Endothelial cell of umbilical vein (primary cell): ENCODE measurements at regions of chr1 and their contacts with region 1.

Region 1: GRCh38 chr1:119808972-119809550 is 2.2 kb downstream of the REG4 start:
- DNase-seq: peak; percentile 65
- H3K4me3 ChIP-seq: no peak overlapping the region
- H3K27ac ChIP-seq: no peak overlapping the region
- H3K4me1 ChIP-seq: no peaks in the 10 kb centered on the region
- H3K27me3 ChIP-seq: peaks cover 14 to 39% of the 10 kb centered on the region in 2 experiments
- CTCF ChIP-seq: peak; percentile 87 to 89
- POLR2A ChIP-seq: no peak

Region 2: GRCh38 chr1:119582801-119583200 is 226.3 kb before region 1 on chr1:
- CTCF ChIA-PET with region 1: interaction called, 3 read pairs
- POLR2A ChIA-PET with region 1: no interaction called
- dilution Hi-C with region 1: no loop called
- intact Hi-C with region 1: loop called (anchors 10 kb)
- DNase-seq: peak; percentile 62
- H3K4me3 ChIP-seq: no peak overlapping the region
- H3K27ac ChIP-seq: no peak overlapping the region
- H3K4me1 ChIP-seq: no peaks in the 10 kb centered on the region
- H3K27me3 ChIP-seq: no peaks in the 10 kb centered on the region
- CTCF ChIP-seq: peak; percentile 54 to 67
- POLR2A ChIP-seq: no peak

Region 3: GRCh38 chr1:119743781-119744597 is 65.1 kb before region 1 on chr1:
- CTCF ChIA-PET with region 1: interaction called, 12 read pairs
- POLR2A ChIA-PET with region 1: no interaction called
- dilution Hi-C with region 1: no loop called
- intact Hi-C with region 1: no loop called
- DNase-seq: peak; percentile 60
- H3K4me3 ChIP-seq: no peak overlapping the region
- H3K27ac ChIP-seq: no peak overlapping the region
- H3K4me1 ChIP-seq: no peaks in the 10 kb centered on the region
- H3K27me3 ChIP-seq: peaks cover 0 to 2% of the 10 kb centered on the region in 2 experiments
- CTCF ChIP-seq: peak; percentile 83 to 85
- POLR2A ChIP-seq: no peak

Region 4: DNA sequence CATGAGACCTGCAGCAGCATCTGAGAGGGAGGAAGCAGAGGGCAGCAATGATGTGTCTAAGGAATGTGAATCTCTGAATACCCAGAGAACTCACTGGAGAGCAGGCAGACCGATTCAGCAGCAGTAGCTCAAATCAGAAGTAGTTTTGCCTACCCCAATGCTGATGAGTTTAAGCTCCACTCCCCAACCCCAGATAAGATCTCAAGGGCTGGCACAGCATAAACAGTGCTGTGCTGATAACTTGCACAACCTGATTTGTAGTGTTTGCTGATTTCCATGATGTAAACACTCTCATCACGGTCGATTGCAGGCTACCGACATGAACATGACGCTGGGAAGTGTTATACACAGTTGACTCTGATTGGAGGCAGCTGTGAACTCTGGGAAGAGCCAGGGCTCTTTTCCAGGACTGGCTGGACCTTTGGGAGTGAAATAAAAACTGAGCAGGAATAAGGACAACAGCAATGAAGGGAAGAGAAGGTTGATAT is 29.1 kb before region 1 on chr1:
- CTCF ChIA-PET with region 1: interaction called, 11 read pairs
- POLR2A ChIA-PET with region 1: no interaction called
- dilution Hi-C with region 1: no loop called
- intact Hi-C with region 1: no loop called
- DNase-seq: no peak
- H3K4me3 ChIP-seq: no peak overlapping the region
- H3K27ac ChIP-seq: no peak overlapping the region
- H3K4me1 ChIP-seq: no peaks in the 10 kb centered on the region
- H3K27me3 ChIP-seq: peaks cover 12 to 13% of the 10 kb centered on the region in 2 experiments
- CTCF ChIP-seq: no peak
- POLR2A ChIP-seq: no peak

Region 5: DNA sequence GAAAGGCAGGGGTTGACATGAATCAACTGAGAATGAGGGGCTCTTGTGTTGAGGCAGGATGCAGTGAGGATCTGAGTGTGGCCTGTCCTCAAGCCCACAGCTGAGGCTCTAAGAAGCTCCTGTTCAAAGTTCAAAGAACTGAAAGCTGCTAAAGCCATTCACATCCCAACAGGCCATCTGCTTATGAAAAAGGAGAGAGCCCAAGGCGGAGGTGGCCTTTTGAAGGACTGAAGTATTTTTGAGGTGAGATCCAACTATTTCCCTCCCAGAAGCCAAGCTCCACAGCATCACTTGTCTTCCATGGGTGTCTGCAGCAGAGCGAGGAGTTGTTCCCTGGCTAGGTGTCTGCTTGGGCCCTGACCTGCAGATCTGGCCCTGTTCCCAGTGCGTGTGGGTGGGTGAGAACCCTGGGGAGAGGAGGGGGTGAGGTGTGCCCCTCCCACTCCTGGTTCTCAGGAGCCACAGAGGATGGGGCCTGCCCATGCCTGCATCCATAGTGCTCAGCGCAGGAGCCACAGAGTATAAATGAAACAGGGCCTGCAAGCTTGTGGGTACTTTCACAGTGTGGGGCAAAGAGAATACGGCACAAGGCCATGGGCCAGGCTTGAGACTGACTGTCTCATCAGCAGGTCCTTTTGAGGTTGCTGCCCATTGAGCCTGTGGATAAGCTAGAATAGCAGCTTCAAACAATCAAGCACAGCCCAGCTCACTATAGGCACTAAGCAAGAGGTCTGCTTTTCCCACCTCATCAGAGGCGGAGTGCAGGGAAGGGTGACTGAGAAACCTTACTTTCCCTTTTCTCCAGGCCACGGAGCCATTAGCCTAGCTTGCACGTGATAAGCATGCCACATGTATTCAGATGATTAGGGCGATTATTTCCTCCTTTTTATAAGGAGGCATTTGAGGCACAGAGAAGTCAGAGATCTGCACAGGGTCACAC is 13.5 kb before region 1 on chr1:
- CTCF ChIA-PET with region 1: interaction called, 25 read pairs
- POLR2A ChIA-PET with region 1: no interaction called
- dilution Hi-C with region 1: no loop called
- intact Hi-C with region 1: no loop called
- DNase-seq: no peak
- H3K4me3 ChIP-seq: no peak overlapping the region
- H3K27ac ChIP-seq: no peak overlapping the region
- H3K4me1 ChIP-seq: no peaks in the 10 kb centered on the region
- H3K27me3 ChIP-seq: peaks cover under 1 to 7% of the 10 kb centered on the region in 2 experiments
- CTCF ChIP-seq: no peak
- POLR2A ChIP-seq: no peak

Region 6: DNA sequence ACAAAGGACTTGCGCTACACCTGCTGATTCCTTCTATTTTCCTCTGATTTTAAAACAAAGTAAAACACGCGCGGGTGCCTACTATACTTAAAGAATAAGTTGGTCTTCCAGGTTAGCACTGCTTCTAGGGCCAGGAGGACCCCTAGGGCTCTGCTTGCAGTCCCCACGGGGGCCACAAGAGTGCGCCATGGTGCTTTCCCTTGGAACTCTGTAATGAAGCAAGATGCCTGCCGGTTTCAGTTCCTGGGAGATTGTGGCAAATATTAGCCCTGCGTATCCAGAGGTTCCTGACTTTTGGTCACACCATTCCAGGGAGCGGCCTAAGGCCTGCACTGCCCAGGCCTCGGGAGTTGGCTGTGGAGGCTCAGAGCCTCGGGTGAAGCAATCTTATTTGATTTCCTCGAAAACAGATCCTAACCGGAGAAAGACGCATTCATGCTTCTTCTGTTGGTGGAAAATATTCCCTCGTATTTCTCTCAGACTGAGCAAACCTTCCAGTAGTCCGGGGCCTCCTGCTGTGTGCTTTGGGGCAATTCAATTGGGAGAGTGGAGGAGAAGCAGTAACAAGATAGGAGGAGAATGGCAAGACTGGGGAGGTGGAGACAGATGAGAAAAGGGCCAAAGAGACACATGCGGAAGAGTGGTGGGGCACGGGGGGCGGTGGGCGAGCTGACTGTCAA is 62.0 kb after region 1 on chr1:
- CTCF ChIA-PET with region 1: interaction called, 17 read pairs
- POLR2A ChIA-PET with region 1: no interaction called
- dilution Hi-C with region 1: no loop called
- intact Hi-C with region 1: loop called (anchors 2 kb)
- DNase-seq: peak; percentile 72
- H3K4me3 ChIP-seq: no peak overlapping the region
- H3K27ac ChIP-seq: no peak overlapping the region
- H3K4me1 ChIP-seq: no peaks in the 10 kb centered on the region
- H3K27me3 ChIP-seq: peaks cover under 1 to 6% of the 10 kb centered on the region in 2 experiments
- CTCF ChIP-seq: peak; percentile 92 to 94
- POLR2A ChIP-seq: no peak